Activated naive CD4-positive, alpha-beta T cell treated with anti-CD3 and anti-CD28 coated beads for 36 hours (primary cell): ENCODE measurements at regions of chr12 and their contacts with region 1.

Region 1: GRCh38 chr12:59650402-59651228 is 54.8 kb downstream of the SLC16A7 start:
- DNase-seq: no peak
- H3K4me3 Mint-ChIP-seq: no peak overlapping the region
- H3K27ac Mint-ChIP-seq: no peak overlapping the region
- H3K4me1 Mint-ChIP-seq: peaks cover 39% of the 10 kb centered on the region
- H3K27me3 Mint-ChIP-seq: no peaks in the 10 kb centered on the region

Region 2: GRCh38 chr12:59499774-59500173 is 150.8 kb before region 1 on chr12:
- CTCF ChIA-PET with region 1: no interaction called
- intact Hi-C with region 1: no loop called
- DNase-seq: no peak
- H3K4me3 Mint-ChIP-seq: no peak overlapping the region
- H3K27ac Mint-ChIP-seq: no peak overlapping the region
- H3K4me1 Mint-ChIP-seq: peaks cover 12% of the 10 kb centered on the region
- H3K27me3 Mint-ChIP-seq: no peaks in the 10 kb centered on the region

Region 3: DNA sequence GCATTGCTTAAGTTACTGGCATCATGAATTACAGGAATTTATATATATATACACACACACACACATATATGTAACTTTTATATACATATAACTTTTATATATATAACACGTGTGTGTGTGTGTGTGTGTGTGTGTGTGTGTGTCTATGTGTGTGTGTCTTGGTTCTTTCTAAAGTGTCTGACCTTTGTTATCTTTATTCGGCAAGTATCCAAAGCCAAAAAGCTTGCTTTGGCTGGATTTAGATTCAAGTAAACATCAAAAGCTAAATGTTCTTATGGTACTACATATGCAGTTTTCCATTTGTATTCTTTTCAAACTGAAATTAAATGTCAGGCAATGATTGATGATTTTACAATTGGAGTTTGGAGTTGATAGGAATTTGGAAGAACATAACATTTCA is 15.1 kb after region 1 on chr12:
- CTCF ChIA-PET with region 1: no interaction called
- intact Hi-C with region 1: loop called (anchors 2 kb)
- DNase-seq: no peak
- H3K4me3 Mint-ChIP-seq: no peak overlapping the region
- H3K27ac Mint-ChIP-seq: no peak overlapping the region
- H3K4me1 Mint-ChIP-seq: peaks cover 40% of the 10 kb centered on the region
- H3K27me3 Mint-ChIP-seq: no peaks in the 10 kb centered on the region